ENCODE measurements at regions of chr11 and their contacts with region 1.

Region 1: GRCh38 chr11:17129003-17129402 is 51.5 kb upstream of the RPS13 start:
- DNase-seq: peak; percentile 44
- H3K27ac ChIP-seq: no peak overlapping the region
- CTCF ChIP-seq: no peak

Region 2: DNA sequence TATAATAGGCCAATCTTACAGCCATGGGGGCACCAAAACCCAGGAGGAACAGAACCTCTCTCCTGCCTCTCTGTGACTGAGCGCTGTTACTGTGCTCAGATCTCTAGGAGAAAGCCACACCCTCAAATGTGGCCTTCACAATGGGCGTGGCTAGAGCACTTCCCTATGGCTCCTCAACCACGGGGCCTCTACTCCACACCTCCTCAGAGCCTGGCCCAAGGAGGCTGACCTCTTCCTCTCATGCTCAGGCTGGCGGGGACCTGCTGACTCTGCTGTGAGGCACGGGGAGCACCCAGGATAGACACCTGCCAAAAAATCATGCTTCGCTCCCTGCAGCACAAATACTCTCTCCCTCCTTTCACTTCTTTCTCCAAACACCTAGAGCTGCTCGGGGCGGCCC is 349.6 kb before region 1 on chr11:
- CTCF ChIA-PET with region 1: no interaction called
- POLR2A ChIA-PET with region 1: no interaction called
- DNase-seq: no peak
- H3K27ac ChIP-seq: no peak overlapping the region
- CTCF ChIP-seq: no peak

Region 3: DNA sequence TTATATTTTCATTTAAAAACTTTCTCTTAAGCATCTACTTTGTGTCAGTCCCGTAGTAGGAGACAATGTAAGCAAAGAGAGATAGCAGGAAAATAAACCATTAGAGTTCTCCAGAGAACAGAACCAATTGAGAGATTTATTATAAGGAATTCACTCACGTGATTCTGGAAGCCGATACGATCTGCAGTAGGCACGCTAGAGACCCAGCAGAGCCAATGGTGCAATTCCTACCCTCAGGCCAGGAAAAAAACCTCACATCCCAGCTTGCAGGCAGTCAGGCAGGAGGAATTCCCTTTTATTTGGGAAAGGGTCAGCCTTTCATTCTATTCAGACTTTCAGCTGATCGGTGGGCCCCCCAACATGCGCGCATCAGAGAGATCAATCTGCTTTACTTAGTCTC is 107.5 kb before region 1 on chr11:
- CTCF ChIA-PET with region 1: no interaction called
- POLR2A ChIA-PET with region 1: interaction called, 17 read pairs
- DNase-seq: no peak
- H3K27ac ChIP-seq: no peak overlapping the region
- CTCF ChIP-seq: no peak